ENCODE measurements at regions of chr1 and their contacts with region 1.

Region 1: DNA sequence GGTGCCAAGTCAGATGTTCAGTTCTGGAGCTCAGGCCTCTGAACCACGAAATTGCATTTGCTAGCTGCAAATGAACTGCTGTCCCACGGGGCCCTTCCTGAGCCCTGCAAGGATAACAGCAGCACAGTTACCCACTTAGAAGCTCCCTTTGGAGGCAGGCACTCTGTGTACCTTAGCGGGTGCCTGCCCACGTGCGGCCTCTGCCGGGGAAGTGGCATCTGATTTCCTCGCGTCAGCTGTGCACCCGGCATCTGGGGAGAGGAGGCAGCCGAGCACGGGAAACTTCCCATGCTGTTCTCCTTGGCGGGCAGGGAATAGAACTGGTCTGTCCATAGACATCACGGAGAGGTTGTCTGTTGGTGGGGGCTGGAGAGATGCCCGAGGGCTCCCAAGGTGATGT is 148.0 kb upstream of the C1orf174 start:
- DNase-seq: no peak
- ATAC-seq: no peak
- H3K4me3 ChIP-seq: no peak overlapping the region
- H3K27ac ChIP-seq: no peak overlapping the region
- H3K4me1 ChIP-seq: no peaks in the 10 kb centered on the region
- H3K27me3 ChIP-seq: peaks cover 5% of the 10 kb centered on the region
- CTCF ChIP-seq: no peak

Region 2: GRCh38 chr1:4027492-4028138 is 20.5 kb before region 1 on chr1:
- CTCF ChIA-PET with region 1: interaction called, 10 read pairs
- POLR2A ChIA-PET with region 1: no interaction called
- in situ Hi-C with region 1: no loop called
- intact Hi-C with region 1: no loop called
- DNase-seq: no peak
- ATAC-seq: no peak
- H3K4me3 ChIP-seq: no peak overlapping the region
- H3K27ac ChIP-seq: no peak overlapping the region
- H3K4me1 ChIP-seq: no peaks in the 10 kb centered on the region
- H3K27me3 ChIP-seq: peaks cover 3% of the 10 kb centered on the region; the same call in 1 of the 2 replicates
- CTCF ChIP-seq: no peak